Vagina (tissue), 2 donors: ENCODE measurements at regions of chr3 and their contacts with region 1.

Region 1: DNA sequence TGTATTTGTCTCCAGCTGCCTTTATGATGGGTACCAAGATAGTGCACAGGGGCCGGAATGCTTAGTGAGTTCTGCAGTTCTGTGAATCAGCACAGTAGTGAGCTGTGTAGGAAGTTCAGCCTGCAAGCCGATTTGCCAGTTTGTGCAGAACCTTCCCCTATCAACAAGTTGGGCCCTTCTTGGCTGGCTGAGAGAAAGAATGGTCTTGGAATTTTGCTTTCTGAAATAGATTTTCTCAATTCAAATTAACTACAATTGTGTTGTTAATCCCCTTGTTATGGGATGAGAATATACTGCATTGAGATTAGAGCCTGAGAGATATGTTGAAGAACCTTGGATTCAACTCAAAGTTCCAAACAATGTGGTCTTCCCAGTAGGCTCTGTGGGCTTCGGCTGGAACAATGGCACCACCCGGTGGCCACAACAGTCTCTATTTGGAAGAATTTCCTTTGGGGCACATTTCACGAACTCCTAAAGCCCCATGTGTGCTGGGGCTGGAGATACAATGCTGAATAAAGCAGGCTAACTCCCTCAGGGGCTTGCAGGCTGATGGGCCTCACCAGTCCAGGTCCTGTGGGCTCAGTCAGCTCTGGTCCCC is 59.1 kb downstream of the TRIM42 start:
- DNase-seq: no peak
- H3K4me3 ChIP-seq: no peak overlapping the region
- H3K27ac ChIP-seq: no peak overlapping the region
- H3K4me1 ChIP-seq: no peaks in the 10 kb centered on the region
- H3K27me3 ChIP-seq: no peaks in the 10 kb centered on the region
- CTCF ChIP-seq: peak; percentile 12 to 60 (median 31)
- POLR2A ChIP-seq: no peak

Region 2: GRCh38 chr3:139935016-139935865 is 801.7 kb before region 1 on chr3 and contains the start of gene CLSTN2:
- intact Hi-C with region 1: loop called (anchors 2 kb)
- DNase-seq: peak in 1 of 2 donors; percentile 87
- H3K4me3 ChIP-seq: peak within 1 kb of the TSS; percentile 53
- H3K27ac ChIP-seq: peak within 1 kb of the TSS; percentile 44
- H3K4me1 ChIP-seq: peaks cover 12% of the 10 kb centered on the region
- H3K27me3 ChIP-seq: no peaks in the 10 kb centered on the region
- CTCF ChIP-seq: no peak
- POLR2A ChIP-seq: peak in 1 of 2 donors; percentile 32
- total RNA-seq, gene CLSTN2: 16.0 TPM